HCT116 (cell line): ENCODE measurements at regions of chr13 and their contacts with region 1.

Region 1: DNA sequence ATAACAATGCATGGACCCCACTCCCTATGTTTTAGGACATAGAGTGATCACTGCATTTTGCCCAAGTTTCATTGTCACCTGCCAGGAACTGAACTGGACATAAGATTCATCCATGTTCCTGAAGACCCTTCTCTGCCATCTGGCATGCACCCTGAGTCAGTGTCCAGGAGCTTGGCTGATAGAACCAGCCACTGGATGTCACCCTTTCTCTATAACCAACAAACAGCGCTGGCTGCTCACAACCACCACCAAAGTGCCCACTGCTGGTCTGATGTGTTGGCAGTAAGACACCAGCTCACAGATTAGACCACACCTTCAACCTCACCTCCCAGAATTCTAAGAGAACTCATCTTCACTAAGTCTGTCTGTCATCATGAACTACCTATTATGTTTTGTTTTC is 333.4 kb downstream of the ITGBL1 start:
- DNase-seq: peak; percentile 10
- ATAC-seq: peak; percentile 54; the same call in 1 of the 2 replicates
- H3K4me3 ChIP-seq: no peak overlapping the region
- H3K27ac ChIP-seq: no peak overlapping the region
- H3K4me1 ChIP-seq: no peaks in the 10 kb centered on the region
- H3K27me3 ChIP-seq: no peaks in the 10 kb centered on the region
- CTCF ChIP-seq: peak in 2 of 3 experiments; percentile 12 to 18; a peak in 2 of 6 replicates
- POLR2A ChIP-seq: no peak
- RAD21 ChIP-seq: peak; percentile 21; the same call in 1 of the 2 replicates

Region 2: DNA sequence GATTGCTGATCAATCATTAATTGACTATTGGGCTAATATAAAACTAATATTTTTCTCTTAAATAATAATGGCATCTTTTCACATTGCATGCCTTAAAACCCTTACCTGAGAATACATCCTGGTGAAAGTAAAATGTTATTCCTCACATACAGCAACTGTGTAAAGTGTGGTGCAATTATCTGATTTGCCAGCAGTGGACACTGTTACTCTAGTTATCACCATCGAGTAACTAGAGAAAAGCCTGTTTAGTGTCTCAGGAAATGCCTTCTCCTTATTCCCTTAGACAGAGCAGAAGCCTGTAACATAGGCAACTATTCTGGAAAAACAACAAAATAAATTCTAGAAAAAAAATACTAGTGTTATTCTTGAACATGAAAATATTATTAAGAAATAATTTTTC is 156.2 kb after region 1 on chr13:
- CTCF ChIA-PET with region 1: interaction called, 14 read pairs
- POLR2A ChIA-PET with region 1: no interaction called
- RAD21 ChIA-PET with region 1: no interaction called
- intact Hi-C with region 1: no loop called
- DNase-seq: no peak
- ATAC-seq: no peak; the same call in 1 of the 2 replicates
- H3K4me3 ChIP-seq: no peak overlapping the region
- H3K27ac ChIP-seq: no peak overlapping the region
- H3K4me1 ChIP-seq: no peaks in the 10 kb centered on the region
- H3K27me3 ChIP-seq: no peaks in the 10 kb centered on the region
- CTCF ChIP-seq: peak in 2 of 3 experiments; percentile 31 to 44; a peak in 2 of 6 replicates
- POLR2A ChIP-seq: no peak
- RAD21 ChIP-seq: peak; percentile 31